Caco-2 (cell line): ENCODE measurements at regions of chr9 and their contacts with region 1.

Region 1: DNA sequence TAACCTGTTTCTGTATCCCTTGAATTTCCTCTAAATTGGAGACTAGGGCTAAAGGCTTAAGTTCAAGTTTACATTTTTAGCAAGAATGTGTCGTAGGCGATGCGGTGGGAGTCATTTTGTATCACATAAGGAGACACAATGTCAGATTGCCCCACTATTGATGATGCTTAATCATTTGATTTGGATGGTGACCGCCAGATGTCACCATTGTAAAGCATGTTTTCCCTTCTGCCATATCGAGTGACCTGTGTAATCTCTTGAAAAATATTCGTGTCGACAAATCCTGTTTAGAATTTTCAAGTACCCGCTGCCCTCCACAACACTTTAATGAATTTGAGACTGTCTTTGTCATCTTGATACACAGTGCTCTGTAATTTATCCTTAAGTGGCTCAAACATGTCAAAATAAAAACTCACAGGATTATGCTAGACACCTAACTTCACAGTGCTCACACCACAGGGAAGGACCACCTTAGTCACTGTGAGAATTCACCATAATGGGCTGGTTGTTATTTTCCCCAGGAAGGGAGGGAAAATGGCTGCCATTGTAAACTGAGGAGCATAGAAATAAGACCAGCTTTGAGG is 34.5 kb upstream of the SLC46A2 start:
- DNase-seq: peak; percentile 36 to 44
- H3K4me3 ChIP-seq: no peak overlapping the region
- H3K4me3 Mint-ChIP-seq: no peak overlapping the region
- H3K27ac Mint-ChIP-seq: no peak overlapping the region
- H3K4me1 ChIP-seq: no peaks in the 10 kb centered on the region
- H3K4me1 Mint-ChIP-seq: peaks cover 10% of the 10 kb centered on the region
- H3K27me3 ChIP-seq: no peaks in the 10 kb centered on the region
- H3K27me3 Mint-ChIP-seq: peaks cover 6% of the 10 kb centered on the region
- CTCF ChIP-seq: peak; percentile 45 to 69

Region 2: DNA sequence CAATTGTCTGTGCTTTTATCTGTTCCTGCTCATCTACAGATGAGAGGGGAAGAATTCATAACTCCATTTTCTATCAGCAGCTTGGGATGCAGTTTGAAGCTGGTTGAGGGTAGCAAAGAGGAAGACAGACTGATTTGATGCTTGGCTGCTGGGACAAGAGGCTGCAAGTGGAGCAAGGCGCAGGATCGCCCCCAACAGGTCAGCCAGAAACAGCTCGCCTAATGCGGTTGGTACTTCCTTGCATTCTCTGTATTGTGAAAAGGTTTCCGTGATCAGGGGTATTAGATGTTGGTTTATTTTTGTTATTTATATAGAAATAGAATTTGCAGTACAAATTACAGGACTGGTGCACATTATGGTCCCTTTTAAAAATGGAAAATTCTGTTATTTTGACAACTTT is 46.3 kb after region 1 on chr9:
- CTCF ChIA-PET with region 1: interaction called, 4 read pairs
- POLR2A ChIA-PET with region 1: no interaction called
- intact Hi-C with region 1: loop called (anchors 1 kb)
- DNase-seq: peak in 1 of 2 experiments; percentile 29
- H3K4me3 ChIP-seq: no peak overlapping the region
- H3K4me3 Mint-ChIP-seq: no peak overlapping the region
- H3K27ac Mint-ChIP-seq: no peak overlapping the region
- H3K4me1 ChIP-seq: no peaks in the 10 kb centered on the region
- H3K4me1 Mint-ChIP-seq: no peaks in the 10 kb centered on the region
- H3K27me3 ChIP-seq: no peaks in the 10 kb centered on the region
- H3K27me3 Mint-ChIP-seq: peaks cover 11% of the 10 kb centered on the region
- CTCF ChIP-seq: peak; percentile 31 to 33

Region 3: GRCh38 chr9:114117996-114118830 is 1193.1 kb after region 1 on chr9:
- CTCF ChIA-PET with region 1: no interaction called
- POLR2A ChIA-PET with region 1: no interaction called
- intact Hi-C with region 1: no loop called
- DNase-seq: peak in 1 of 2 experiments; percentile 38
- H3K4me3 ChIP-seq: no peak overlapping the region
- H3K4me3 Mint-ChIP-seq: peak overlapping the region; percentile 3
- H3K27ac Mint-ChIP-seq: peak overlapping the region; percentile 3
- H3K4me1 ChIP-seq: peaks cover 45% of the 10 kb centered on the region
- H3K4me1 Mint-ChIP-seq: peaks cover 23% of the 10 kb centered on the region
- H3K27me3 ChIP-seq: no peaks in the 10 kb centered on the region
- H3K27me3 Mint-ChIP-seq: no peaks in the 10 kb centered on the region
- CTCF ChIP-seq: no peak